ENCODE measurements at regions of chr11 and their contacts with region 1.

Region 1: DNA sequence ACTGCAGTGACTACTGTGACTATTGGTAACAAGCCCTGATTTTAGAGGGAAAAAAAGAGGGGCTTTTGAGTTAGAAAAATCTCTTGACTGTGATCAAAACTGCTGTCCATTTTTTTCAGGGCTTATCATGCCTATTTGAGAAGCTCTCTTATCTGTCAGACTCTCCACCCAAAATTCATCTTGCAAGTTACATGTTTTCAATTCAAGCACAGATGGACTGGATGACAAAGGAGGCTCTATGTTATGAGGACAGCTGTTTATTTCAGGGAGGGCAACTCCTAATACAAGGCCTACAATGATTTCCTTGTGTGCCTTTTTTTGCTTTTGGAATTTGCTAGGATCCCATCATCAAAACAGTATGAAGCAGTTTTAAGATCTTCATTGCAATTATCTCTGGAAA is 35.2 kb upstream of the USP47 start:
- DNase-seq: no peak
- ATAC-seq: peak in 3 of 4 donors; percentile 37 to 56 (median 41)
- H3K4me3 ChIP-seq: no peak overlapping the region
- H3K27ac ChIP-seq: peak overlapping the region in 8 of 12 donors; percentile 8 to 57 (median 29)
- H3K4me1 ChIP-seq: peaks cover 0 to 29% (median 6%) of the 10 kb centered on the region in 12 donors
- H3K27me3 ChIP-seq: no peaks in the 10 kb centered on the region
- CTCF ChIP-seq: no peak
- POLR2A ChIP-seq: no peak

Region 2: DNA sequence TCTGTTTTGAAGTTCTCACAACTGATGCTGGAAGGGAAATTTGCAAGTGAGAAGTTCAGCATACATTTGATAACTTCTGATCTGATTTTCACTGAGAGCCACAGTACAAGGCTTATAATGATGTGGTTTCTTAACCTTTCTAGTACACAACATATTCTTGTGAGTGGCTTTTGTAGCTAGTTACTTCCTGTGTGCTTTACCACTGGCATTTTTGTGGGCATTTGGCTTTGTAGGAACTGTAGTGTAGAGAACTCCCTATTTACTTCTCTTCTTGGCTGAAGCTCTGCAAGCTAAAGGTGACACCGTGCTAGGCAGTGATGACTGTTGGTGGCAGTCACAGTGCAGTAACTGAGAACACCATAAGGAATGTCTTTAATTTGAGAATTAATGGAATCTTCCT is 50.1 kb after region 1 on chr11:
- intact Hi-C with region 1: no loop called
- DNase-seq: no peak
- ATAC-seq: peak; percentile 23 to 72 (median 56)
- H3K4me3 ChIP-seq: no peak overlapping the region
- H3K27ac ChIP-seq: peak overlapping the region in 1 of 12 donors; percentile 25
- H3K4me1 ChIP-seq: peaks cover 0 to 89% (median 64%) of the 10 kb centered on the region in 12 donors
- H3K27me3 ChIP-seq: no peaks in the 10 kb centered on the region
- CTCF ChIP-seq: no peak
- POLR2A ChIP-seq: no peak

Region 3: GRCh38 chr11:11895672-11896071 is 89.1 kb after region 1 on chr11:
- intact Hi-C with region 1: loop called in 7 of 10 experiments (anchors 5 to 10 kb)
- DNase-seq: no peak
- ATAC-seq: no peak
- H3K4me3 ChIP-seq: no peak overlapping the region
- H3K27ac ChIP-seq: no peak overlapping the region
- H3K4me1 ChIP-seq: peaks cover 0 to 7% (median 0%) of the 10 kb centered on the region in 12 donors
- H3K27me3 ChIP-seq: no peaks in the 10 kb centered on the region
- CTCF ChIP-seq: peak in 6 of 12 donors; percentile 10 to 39 (median 22)
- POLR2A ChIP-seq: no peak

Region 4: DNA sequence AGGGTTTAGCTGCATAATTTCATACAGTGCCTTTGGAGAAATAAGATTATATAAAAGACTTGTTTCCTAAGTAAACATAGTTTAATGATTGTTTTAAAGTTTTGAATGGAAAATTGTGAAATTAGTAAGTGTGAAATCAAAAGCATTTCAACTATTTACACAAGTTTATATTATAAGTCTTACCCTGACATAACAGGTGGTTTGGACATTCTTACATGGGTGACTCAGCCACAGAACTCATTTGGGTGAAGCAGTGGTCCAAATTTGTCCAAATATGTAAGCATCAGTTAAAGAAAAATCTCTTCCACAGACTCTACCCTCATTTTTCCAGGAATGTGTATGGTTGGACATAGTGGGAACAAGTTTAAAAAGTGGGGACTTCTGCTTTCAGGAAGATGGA is 103.1 kb after region 1 on chr11:
- intact Hi-C with region 1: loop called in 2 of 10 experiments (anchors 10 kb)
- DNase-seq: no peak
- ATAC-seq: no peak
- H3K4me3 ChIP-seq: no peak overlapping the region
- H3K27ac ChIP-seq: no peak overlapping the region
- H3K4me1 ChIP-seq: no peaks in the 10 kb centered on the region
- H3K27me3 ChIP-seq: no peaks in the 10 kb centered on the region
- CTCF ChIP-seq: no peak
- POLR2A ChIP-seq: no peak

Region 5: GRCh38 chr11:11916981-11917399 is 110.4 kb after region 1 on chr11:
- intact Hi-C with region 1: loop called in 1 of 10 experiments (anchors 10 kb)
- DNase-seq: no peak
- ATAC-seq: peak in 3 of 4 donors; percentile 30 to 72 (median 44)
- H3K4me3 ChIP-seq: no peak overlapping the region
- H3K27ac ChIP-seq: peak overlapping the region in 4 of 12 donors; percentile 4 to 31 (median 16)
- H3K4me1 ChIP-seq: peaks cover 0 to 16% (median 7%) of the 10 kb centered on the region in 12 donors
- H3K27me3 ChIP-seq: no peaks in the 10 kb centered on the region
- CTCF ChIP-seq: no peak
- POLR2A ChIP-seq: no peak

Region 6: DNA sequence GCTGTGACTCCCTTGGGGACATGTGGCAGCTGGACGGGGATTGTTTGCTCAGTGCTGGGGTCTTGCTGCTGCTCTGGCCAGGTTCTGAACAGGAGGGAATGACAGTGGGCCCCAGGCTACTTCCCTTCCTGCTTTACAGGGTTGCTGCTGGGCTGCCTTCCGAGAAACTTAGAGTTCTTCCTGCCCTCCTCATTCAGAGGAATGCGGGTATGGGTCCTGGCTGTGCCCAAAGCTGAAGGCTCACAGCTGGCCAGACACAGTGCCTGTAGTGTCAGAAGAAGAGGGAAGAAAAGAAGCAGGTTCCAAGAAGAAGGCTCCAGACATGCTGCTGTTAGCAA is 462.5 kb after region 1 on chr11:
- intact Hi-C with region 1: loop called in 1 of 10 experiments (anchors 10 kb)
- DNase-seq: peak in 1 of 5 donors; percentile 64
- ATAC-seq: peak; percentile 71 to 80 (median 75)
- H3K4me3 ChIP-seq: no peak overlapping the region
- H3K27ac ChIP-seq: peak overlapping the region in 3 of 12 donors; percentile 34 to 77 (median 58)
- H3K4me1 ChIP-seq: peaks cover 0 to 19% (median 11%) of the 10 kb centered on the region in 12 donors
- H3K27me3 ChIP-seq: no peaks in the 10 kb centered on the region
- CTCF ChIP-seq: no peak
- POLR2A ChIP-seq: no peak

Region 7: DNA sequence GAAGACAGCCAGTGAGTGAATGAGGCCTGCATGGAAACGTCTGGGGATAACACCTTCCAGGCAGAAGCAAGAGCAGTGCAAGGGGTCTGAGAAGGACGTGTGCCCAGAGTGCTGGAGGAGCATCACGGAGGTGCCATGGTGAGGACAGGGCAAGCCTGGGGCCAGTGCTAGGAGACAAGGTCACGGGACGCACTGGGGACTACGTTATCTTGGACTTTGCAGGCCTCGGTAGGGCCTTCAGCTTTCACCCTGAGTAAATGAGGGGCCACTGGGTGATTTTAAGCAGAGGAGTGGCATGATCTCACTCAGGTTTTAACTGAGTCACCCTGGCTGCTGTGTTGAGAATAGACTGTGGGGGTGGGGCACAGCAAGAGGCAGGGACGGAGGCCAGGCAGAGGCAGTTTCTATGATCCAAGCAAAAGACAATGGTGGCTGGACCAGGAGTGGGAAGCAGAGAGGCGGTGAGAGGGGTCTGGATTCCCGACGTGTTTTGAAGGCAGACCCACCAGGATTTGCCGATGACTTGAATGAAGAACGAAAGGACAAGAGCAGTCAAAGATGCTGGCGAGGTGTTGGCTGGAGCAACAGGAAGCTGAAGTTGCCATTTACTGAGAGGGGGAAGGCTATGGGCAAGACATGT is 468.1 kb after region 1 on chr11:
- intact Hi-C with region 1: loop called in 2 of 10 experiments (anchors 5 to 10 kb)
- DNase-seq: peak in 1 of 5 donors; percentile 7
- ATAC-seq: peak in 1 of 4 donors; percentile 9
- H3K4me3 ChIP-seq: no peak overlapping the region
- H3K27ac ChIP-seq: no peak overlapping the region
- H3K4me1 ChIP-seq: peaks cover 0 to 11% (median 3%) of the 10 kb centered on the region in 12 donors
- H3K27me3 ChIP-seq: no peaks in the 10 kb centered on the region
- CTCF ChIP-seq: no peak
- POLR2A ChIP-seq: no peak